Activated CD4-positive, alpha-beta memory T cell treated with anti-CD3 and anti-CD28 coated beads, Interleukin-2, amount 10 ng/mL, durations not matched to agents 7 days and 5 days (primary cell): ENCODE measurements at regions of chr13 and their contacts with region 1.

Region 1: DNA sequence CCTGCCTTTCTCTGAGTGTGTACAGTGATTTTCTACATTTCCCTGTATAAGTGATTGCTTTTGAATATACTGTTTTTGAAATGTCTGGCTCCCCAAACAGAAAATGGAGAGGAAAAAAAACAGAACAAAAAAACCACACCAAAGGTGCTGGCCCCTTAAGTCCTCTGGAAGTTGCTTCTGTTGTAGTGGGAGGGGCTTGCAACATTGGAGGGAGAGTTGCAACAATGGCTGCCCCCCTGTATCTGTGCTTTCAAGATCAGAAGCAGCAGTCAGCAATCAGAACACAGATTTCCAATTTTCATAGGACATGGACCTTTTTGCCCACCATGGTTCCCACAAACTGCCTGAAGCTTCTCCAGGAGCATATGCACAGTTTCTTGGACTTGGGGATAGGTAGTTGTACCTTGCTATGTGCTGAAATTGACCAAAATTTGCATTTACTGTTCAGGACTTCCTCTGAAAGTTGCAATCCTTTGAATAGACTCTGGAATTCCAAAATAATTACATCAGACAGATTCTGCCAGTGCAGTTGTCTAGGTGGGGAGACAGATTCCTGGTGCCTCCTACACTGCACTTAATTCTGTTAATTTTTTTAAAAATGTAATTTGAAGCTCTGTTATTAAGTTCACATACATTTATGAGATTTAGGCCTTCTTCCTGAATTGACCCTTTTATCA is 13.8 kb downstream of the BIVM start:
- DNase-seq: no peak
- H3K4me3 Mint-ChIP-seq: no peak overlapping the region
- H3K27ac Mint-ChIP-seq: no peak overlapping the region
- H3K4me1 Mint-ChIP-seq: peaks cover 16% of the 10 kb centered on the region
- H3K27me3 Mint-ChIP-seq: no peaks in the 10 kb centered on the region

Region 2: DNA sequence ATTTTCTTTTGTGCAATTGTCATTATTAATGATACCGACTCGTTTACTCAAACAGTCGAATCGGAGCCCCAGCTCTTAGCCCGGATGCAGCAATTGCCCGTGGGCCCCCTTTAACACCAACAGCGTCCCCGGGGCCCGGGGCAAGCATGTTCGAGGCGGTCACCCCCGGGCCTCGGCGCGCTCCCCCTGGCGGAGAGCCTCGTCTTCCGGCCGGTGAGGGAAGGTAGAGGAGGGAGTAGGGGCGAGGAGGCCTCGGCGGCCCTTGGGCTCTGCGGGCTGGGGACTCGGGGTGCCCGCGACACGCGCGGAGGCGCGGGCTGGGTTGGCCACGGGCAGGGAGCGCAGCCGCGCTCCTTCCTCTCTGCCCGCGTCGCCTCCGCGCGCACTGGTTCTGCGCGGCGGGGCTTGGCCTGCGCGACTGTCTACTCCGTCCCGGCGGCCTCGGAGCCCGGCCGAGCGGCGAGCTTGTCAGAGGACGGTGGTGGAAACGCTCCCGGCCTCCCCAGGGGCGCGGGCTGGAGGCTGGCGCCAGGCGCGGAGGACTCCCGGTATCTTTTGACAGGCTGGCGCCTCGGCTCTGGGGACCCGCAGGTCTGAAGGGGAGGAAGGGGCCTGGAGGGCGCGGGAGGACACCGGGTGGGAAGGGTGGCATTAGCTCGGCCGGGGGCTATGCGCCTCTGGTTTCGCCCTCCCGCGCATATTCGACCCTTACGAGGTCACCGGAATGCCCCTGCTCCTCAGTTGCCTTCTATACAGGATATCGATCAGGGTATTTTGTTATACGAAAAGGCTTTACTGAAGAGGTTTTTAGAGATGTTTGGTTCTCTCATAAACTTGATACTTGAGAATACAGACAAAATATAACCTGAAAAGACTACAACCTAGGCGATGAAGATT is 12.4 kb before region 1 on chr13:
- CTCF ChIA-PET with region 1: interaction called, 11 read pairs
- POLR2A ChIA-PET with region 1: interaction called, 12 read pairs
- DNase-seq: peak; percentile 89
- H3K4me3 Mint-ChIP-seq: peak overlapping the region; percentile 90
- H3K27ac Mint-ChIP-seq: peak overlapping the region; percentile 74
- H3K4me1 Mint-ChIP-seq: peaks cover 47% of the 10 kb centered on the region
- H3K27me3 Mint-ChIP-seq: no peaks in the 10 kb centered on the region